Adrenal gland (tissue), 19 donors: ENCODE measurements at regions of chr16 and their contacts with region 1.

Region 1: DNA sequence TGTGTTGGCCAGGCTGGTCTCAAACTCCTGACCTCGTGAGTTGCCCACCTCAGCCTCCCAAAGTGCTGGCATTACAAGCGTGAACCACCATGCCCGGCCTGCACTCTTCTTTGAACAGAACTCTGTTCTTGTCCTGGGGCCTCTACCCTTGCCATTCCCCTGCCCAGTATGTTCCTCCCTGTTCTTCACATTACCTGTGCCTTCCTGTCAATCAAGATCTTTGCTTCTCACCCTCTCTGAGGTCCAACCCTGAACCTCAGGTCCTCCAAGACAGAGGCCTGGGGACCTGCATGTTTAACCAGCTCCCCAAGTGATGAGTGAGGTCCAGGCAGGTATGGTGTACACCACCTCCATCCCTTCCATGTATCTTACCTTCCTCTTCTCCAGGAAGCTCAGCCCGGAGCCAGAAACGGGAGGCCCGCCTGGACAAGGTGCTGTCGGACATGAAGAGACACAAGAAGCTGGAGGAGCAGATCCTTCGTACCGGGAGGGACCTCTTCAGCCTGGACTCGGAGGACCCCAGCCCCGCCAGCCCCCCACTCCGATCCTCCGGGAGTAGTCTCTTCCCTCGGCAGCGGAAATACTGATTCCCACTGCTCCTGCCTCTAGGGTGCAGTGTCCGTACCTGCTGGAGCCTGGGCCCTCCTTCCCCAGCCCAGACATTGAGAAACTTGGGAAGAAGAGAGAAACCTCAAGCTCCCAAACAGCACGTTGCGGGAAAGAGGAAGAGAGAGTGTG is 925 bp upstream of the MVP start:
- DNase-seq: peak in 5 of 7 donors; percentile 48 to 67 (median 62)
- H3K4me3 ChIP-seq: peak overlapping the region in 1 of 4 donors; percentile 78
- H3K27ac ChIP-seq: peak overlapping the region in 3 of 5 donors; percentile 4 to 96 (median 93)
- H3K4me1 ChIP-seq: peaks cover 42 to 73% of the 10 kb centered on the region in 2 donors
- H3K27me3 ChIP-seq: no peaks in the 10 kb centered on the region
- CTCF ChIP-seq: peak; percentile 6 to 50 (median 28)
- POLR2A ChIP-seq: no peak

Region 2: GRCh38 chr16:29848420-29849297 is 29.3 kb after region 1 on chr16:
- intact Hi-C with region 1: loop called in 1 of 2 experiments (anchors 2 kb)
- DNase-seq: peak; percentile 77 to 89 (median 84)
- H3K4me3 ChIP-seq: no peak overlapping the region
- H3K27ac ChIP-seq: peak overlapping the region in 2 of 5 donors; percentile 44 to 65
- H3K4me1 ChIP-seq: peaks cover 4 to 5% of the 10 kb centered on the region in 2 donors
- H3K27me3 ChIP-seq: no peaks in the 10 kb centered on the region
- CTCF ChIP-seq: peak; percentile 86 to 95 (median 88)
- POLR2A ChIP-seq: no peak

Region 3: GRCh38 chr16:30183233-30184095 is 364.1 kb after region 1 on chr16 and contains the start of gene CORO1A:
- intact Hi-C with region 1: no loop called
- DNase-seq: peak; percentile 81 to 89 (median 82)
- H3K4me3 ChIP-seq: peak within 1 kb of the TSS in 2 of 4 donors; percentile 51 to 72
- H3K27ac ChIP-seq: peak within 1 kb of the TSS in 4 of 5 donors; percentile 57 to 81 (median 64)
- H3K4me1 ChIP-seq: peaks cover 0 to 3% of the 10 kb centered on the region in 2 donors
- H3K27me3 ChIP-seq: no peaks in the 10 kb centered on the region
- CTCF ChIP-seq: no peak
- POLR2A ChIP-seq: peak in 1 of 2 donors; percentile 15
- total RNA-seq, gene CORO1A: 3.3 to 69.1 (median 39.6) TPM